AG04449 (cell line): ENCODE measurements at regions of chr2 and their contacts with region 1.

Region 1: GRCh38 chr2:54838585-54839035 is 115.1 kb downstream of the EML6 start:
- DNase-seq: no peak
- H3K4me3 ChIP-seq: no peak overlapping the region
- CTCF ChIP-seq: peak; percentile 85

Region 2: GRCh38 chr2:54106631-54107454 is 731.8 kb before region 1 on chr2:
- CTCF ChIA-PET with region 1: interaction called, 18 read pairs
- POLR2A ChIA-PET with region 1: no interaction called
- DNase-seq: no peak
- H3K4me3 ChIP-seq: no peak overlapping the region
- CTCF ChIP-seq: peak; percentile 64

Region 3: DNA sequence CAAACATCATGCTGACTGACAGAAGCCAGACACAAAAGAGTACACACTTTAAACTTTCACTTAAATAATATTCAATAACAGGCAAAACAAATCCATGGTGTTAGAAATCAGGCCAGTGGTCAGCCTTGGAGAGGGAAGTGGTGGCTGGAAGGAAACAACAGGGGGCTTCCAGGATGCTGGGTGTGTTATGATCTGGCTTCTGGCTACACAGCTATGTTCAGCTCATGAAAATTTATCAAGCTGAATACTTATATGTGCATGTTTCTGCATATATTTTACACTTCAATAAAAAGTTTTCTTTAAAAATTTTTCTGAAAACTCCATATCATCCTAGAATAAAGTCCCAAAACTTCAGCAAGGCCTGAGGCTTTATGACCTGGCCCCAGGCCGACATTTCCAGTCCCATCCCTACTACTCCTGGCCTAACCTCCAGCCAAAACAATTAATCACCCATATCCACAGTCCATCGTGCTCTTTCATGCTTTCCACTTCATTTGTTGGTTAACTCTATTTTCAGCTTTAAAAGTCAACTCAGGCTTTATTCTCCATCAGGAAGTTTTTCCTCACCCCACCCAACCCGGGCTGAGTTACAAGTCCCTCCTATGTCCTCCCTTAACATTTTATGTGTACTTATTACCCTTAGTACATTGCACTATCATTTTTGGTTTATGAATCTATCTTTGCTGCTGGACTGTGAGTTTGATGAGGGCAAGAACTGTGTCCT is 410.3 kb before region 1 on chr2:
- CTCF ChIA-PET with region 1: no interaction called
- POLR2A ChIA-PET with region 1: no interaction called
- DNase-seq: no peak
- H3K4me3 ChIP-seq: no peak overlapping the region
- CTCF ChIP-seq: no peak

Region 4: DNA sequence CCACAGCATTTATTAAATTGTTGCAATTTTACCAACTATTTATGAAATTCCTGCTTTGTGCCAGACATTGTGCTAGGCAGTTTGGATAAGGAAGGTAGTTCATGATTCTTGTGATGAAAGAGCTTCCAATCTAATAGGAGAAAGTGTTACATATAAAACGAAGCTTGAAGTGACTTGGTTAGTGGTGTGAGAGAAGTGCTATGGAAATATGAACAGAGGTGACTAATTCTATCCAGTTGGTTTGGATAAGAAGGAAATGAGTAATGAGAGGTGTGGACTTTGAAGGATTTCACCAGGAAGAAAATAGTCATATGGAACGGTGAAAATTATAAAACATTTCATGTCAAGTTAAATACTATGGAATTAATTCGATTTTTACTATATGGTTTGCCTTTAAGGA is 66.5 kb before region 1 on chr2:
- CTCF ChIA-PET with region 1: interaction called, 19 read pairs
- POLR2A ChIA-PET with region 1: no interaction called
- DNase-seq: no peak
- H3K4me3 ChIP-seq: no peak overlapping the region
- CTCF ChIP-seq: no peak

Region 5: DNA sequence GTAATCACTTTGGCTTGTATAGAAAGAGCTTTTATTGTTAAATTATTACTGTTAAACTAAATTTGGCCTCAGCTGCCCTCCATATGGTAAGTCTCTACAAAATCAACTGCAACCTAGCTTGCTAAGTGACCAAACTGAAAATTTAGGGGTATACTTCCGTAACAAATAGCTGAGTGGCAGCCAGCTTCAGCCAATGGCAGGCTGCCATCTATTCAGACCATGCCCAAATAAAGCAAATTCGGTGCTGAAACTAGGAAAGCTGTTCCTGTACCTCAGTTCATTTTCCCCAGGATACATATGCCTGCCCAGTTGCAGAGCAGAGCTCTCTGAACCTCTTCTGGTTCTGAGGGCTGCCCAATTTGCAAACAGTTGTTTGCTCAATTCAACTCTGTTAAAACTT is 20.4 kb before region 1 on chr2:
- CTCF ChIA-PET with region 1: interaction called, 95 read pairs
- POLR2A ChIA-PET with region 1: no interaction called
- DNase-seq: no peak
- H3K4me3 ChIP-seq: no peak overlapping the region
- CTCF ChIP-seq: no peak

Region 6: GRCh38 chr2:54879598-54880332 is 41.2 kb after region 1 on chr2:
- CTCF ChIA-PET with region 1: interaction called, 10 read pairs
- POLR2A ChIA-PET with region 1: no interaction called
- DNase-seq: no peak
- H3K4me3 ChIP-seq: no peak overlapping the region
- CTCF ChIP-seq: no peak